Activated naive CD4-positive, alpha-beta T cell treated with anti-CD3 and anti-CD28 coated beads for 36 hours (primary cell): ENCODE measurements at regions of chr16 and their contacts with region 1.

Region 1: GRCh38 chr16:22321339-22322001 is 24.3 kb downstream of the POLR3E start:
- DNase-seq: peak; percentile 83
- H3K4me3 Mint-ChIP-seq: no peak overlapping the region
- H3K27ac Mint-ChIP-seq: peak overlapping the region; percentile 75
- H3K4me1 Mint-ChIP-seq: no peaks in the 10 kb centered on the region
- H3K27me3 Mint-ChIP-seq: no peaks in the 10 kb centered on the region

Region 2: GRCh38 chr16:21158208-21159110 is 1163.0 kb before region 1 on chr16 and contains the start of gene LDAF1:
- CTCF ChIA-PET with region 1: interaction called, 4 read pairs
- intact Hi-C with region 1: loop called (anchors 2 kb)
- DNase-seq: peak; percentile 86
- H3K4me3 Mint-ChIP-seq: peak within 1 kb of the TSS; percentile 88
- H3K27ac Mint-ChIP-seq: no peak within 1 kb of the TSS
- H3K4me1 Mint-ChIP-seq: peaks cover 26% of the 10 kb centered on the region
- H3K27me3 Mint-ChIP-seq: no peaks in the 10 kb centered on the region
- total RNA-seq, gene LDAF1: 13.3 to 14.5 TPM